CD8-positive, alpha-beta T cell (primary cell): ENCODE measurements at regions of chr2 and their contacts with region 1.

Region 1: GRCh38 chr2:170409164-170409535 is 231.2 kb downstream of the MYO3B start:
- DNase-seq: peak; percentile 36 to 85 (median 75)
- ATAC-seq: peak; percentile 59
- H3K4me3 ChIP-seq: no peak overlapping the region
- H3K4me3 Mint-ChIP-seq: peak overlapping the region; percentile 40
- H3K27ac ChIP-seq: no peak overlapping the region
- H3K27ac Mint-ChIP-seq: no peak overlapping the region
- H3K4me1 ChIP-seq: peaks cover 9% of the 10 kb centered on the region
- H3K4me1 Mint-ChIP-seq: peaks cover 13% of the 10 kb centered on the region
- H3K27me3 ChIP-seq: peaks cover 0 to 2% of the 10 kb centered on the region in 2 experiments
- H3K27me3 Mint-ChIP-seq: peaks cover 27% of the 10 kb centered on the region
- CTCF ChIP-seq: peak; percentile 91

Region 2: GRCh38 chr2:170350929-170351826 is 58.0 kb before region 1 on chr2:
- CTCF ChIA-PET with region 1: no interaction called
- POLR2A ChIA-PET with region 1: no interaction called
- intact Hi-C with region 1: no loop called
- DNase-seq: no peak
- ATAC-seq: no peak
- H3K4me3 ChIP-seq: no peak overlapping the region
- H3K4me3 Mint-ChIP-seq: no peak overlapping the region
- H3K27ac ChIP-seq: no peak overlapping the region
- H3K27ac Mint-ChIP-seq: no peak overlapping the region
- H3K4me1 ChIP-seq: peaks cover 16% of the 10 kb centered on the region
- H3K4me1 Mint-ChIP-seq: peaks cover 19% of the 10 kb centered on the region
- H3K27me3 ChIP-seq: no peaks in the 10 kb centered on the region
- H3K27me3 Mint-ChIP-seq: peaks cover 14% of the 10 kb centered on the region
- CTCF ChIP-seq: no peak

Region 3: GRCh38 chr2:170391018-170391417 is 18.1 kb before region 1 on chr2:
- CTCF ChIA-PET with region 1: interaction called, 39 read pairs
- POLR2A ChIA-PET with region 1: no interaction called
- intact Hi-C with region 1: no loop called
- DNase-seq: no peak
- ATAC-seq: no peak
- H3K4me3 ChIP-seq: no peak overlapping the region
- H3K4me3 Mint-ChIP-seq: no peak overlapping the region
- H3K27ac ChIP-seq: no peak overlapping the region
- H3K27ac Mint-ChIP-seq: no peak overlapping the region
- H3K4me1 ChIP-seq: no peaks in the 10 kb centered on the region
- H3K4me1 Mint-ChIP-seq: no peaks in the 10 kb centered on the region
- H3K27me3 ChIP-seq: peaks cover 0 to 3% of the 10 kb centered on the region in 2 experiments
- H3K27me3 Mint-ChIP-seq: peaks cover 28% of the 10 kb centered on the region
- CTCF ChIP-seq: no peak

Region 4: DNA sequence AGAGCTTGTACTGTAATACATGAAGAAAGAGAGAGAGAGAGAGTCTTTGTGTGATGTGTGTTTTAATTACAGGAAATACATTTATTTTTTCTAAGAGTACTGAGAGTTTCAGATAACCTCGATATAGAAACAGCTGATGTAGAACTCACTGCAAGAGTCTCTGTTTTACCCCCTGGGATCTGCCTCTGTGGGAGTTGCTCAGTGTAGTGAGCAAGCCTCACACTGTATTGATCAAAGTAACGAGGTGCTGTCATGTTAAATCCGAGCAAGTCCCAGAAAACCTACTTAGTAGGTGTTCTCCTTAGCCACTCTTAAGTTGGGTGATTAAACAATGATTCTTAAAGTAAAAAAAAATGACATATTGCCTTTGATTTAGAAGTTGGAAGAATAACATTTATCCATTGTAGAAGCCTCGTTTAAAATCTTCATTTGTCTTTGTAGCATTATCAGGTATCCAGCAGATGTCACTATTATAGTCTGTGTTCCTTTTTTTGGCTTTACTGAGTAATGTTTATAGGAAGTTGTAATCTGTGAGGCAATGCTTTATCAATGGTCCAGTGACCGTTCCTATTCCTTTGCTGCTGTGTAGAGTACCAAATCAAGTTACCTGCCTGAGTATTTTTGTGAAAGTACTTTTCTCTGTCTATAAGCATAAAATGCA is 12.2 kb before region 1 on chr2:
- CTCF ChIA-PET with region 1: interaction called, 39 read pairs
- POLR2A ChIA-PET with region 1: no interaction called
- intact Hi-C with region 1: no loop called
- DNase-seq: peak in 2 of 9 experiments; percentile 4 to 19
- ATAC-seq: no peak
- H3K4me3 ChIP-seq: no peak overlapping the region
- H3K4me3 Mint-ChIP-seq: no peak overlapping the region
- H3K27ac ChIP-seq: no peak overlapping the region
- H3K27ac Mint-ChIP-seq: no peak overlapping the region
- H3K4me1 ChIP-seq: no peaks in the 10 kb centered on the region
- H3K4me1 Mint-ChIP-seq: no peaks in the 10 kb centered on the region
- H3K27me3 ChIP-seq: no peaks in the 10 kb centered on the region
- H3K27me3 Mint-ChIP-seq: peaks cover 30% of the 10 kb centered on the region
- CTCF ChIP-seq: no peak

Region 5: GRCh38 chr2:170420961-170421687 is 12.0 kb after region 1 on chr2:
- CTCF ChIA-PET with region 1: interaction called, 47 read pairs
- POLR2A ChIA-PET with region 1: no interaction called
- intact Hi-C with region 1: no loop called
- DNase-seq: no peak
- ATAC-seq: no peak
- H3K4me3 ChIP-seq: no peak overlapping the region
- H3K4me3 Mint-ChIP-seq: no peak overlapping the region
- H3K27ac ChIP-seq: no peak overlapping the region
- H3K27ac Mint-ChIP-seq: no peak overlapping the region
- H3K4me1 ChIP-seq: no peaks in the 10 kb centered on the region
- H3K4me1 Mint-ChIP-seq: no peaks in the 10 kb centered on the region
- H3K27me3 ChIP-seq: no peaks in the 10 kb centered on the region
- H3K27me3 Mint-ChIP-seq: peaks cover 12% of the 10 kb centered on the region
- CTCF ChIP-seq: no peak

Region 6: DNA sequence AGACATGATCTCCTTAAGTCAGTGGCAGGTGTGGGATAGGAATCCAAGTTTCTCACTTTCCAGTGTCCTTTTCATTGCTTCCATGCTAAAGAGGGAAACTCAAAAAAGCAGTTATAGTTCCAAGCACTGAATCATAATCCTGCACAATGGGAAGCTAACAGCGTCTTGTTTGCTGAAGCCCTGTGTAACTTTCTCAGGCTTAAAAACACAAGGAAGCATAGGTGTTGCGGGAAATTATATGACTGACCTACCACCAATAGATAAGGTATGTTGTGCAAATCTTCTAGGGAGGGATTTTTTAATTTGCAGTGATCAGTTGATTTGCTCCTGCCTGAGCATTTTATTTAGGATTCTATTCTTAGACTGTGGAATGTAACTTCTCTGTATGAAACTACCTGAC is 19.7 kb after region 1 on chr2:
- CTCF ChIA-PET with region 1: interaction called, 14 read pairs
- POLR2A ChIA-PET with region 1: no interaction called
- intact Hi-C with region 1: no loop called
- DNase-seq: no peak
- ATAC-seq: no peak
- H3K4me3 ChIP-seq: no peak overlapping the region
- H3K4me3 Mint-ChIP-seq: no peak overlapping the region
- H3K27ac ChIP-seq: no peak overlapping the region
- H3K27ac Mint-ChIP-seq: no peak overlapping the region
- H3K4me1 ChIP-seq: no peaks in the 10 kb centered on the region
- H3K4me1 Mint-ChIP-seq: no peaks in the 10 kb centered on the region
- H3K27me3 ChIP-seq: no peaks in the 10 kb centered on the region
- H3K27me3 Mint-ChIP-seq: peaks cover 5% of the 10 kb centered on the region
- CTCF ChIP-seq: no peak

Region 7: DNA sequence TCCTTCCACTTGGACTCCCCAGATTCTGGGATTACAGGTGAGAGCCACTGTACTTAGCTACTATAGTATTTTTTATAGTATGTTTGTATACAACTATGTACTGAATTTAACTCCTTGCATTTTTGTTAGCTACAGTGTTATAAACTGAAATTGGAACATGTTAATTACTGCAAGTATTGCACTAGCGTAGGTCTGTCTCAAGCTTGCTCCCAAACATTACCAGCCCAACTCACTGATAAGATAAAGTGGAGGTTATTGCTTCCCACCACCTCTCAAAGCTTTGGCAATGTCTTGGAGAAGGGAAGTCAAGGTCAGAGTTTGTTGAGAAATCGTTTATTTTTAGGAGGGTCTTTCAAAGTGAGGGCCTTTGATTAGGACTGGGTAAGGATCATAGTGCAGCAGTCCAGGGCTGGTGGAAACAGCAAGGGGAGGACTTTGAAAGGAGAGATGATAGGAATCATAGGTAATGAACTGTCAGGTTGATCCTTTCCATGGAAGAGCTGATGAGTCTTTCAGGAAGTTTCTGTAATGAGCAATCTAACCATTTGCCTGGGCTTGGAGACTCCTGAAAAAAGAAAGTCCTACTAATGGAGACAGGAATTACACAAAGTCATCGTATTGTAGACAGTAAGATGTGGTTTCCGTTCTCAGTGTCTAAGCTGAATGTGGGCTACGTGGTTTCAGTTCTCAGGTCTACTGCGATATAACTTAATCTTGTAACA is 25.9 kb after region 1 on chr2:
- CTCF ChIA-PET with region 1: interaction called, 14 read pairs
- POLR2A ChIA-PET with region 1: no interaction called
- intact Hi-C with region 1: no loop called
- DNase-seq: peak in 2 of 9 experiments; percentile 47 to 67
- ATAC-seq: peak; percentile 64
- H3K4me3 ChIP-seq: no peak overlapping the region
- H3K4me3 Mint-ChIP-seq: peak overlapping the region; percentile 67
- H3K27ac ChIP-seq: no peak overlapping the region
- H3K27ac Mint-ChIP-seq: peak overlapping the region; percentile 38
- H3K4me1 ChIP-seq: peaks cover 21% of the 10 kb centered on the region
- H3K4me1 Mint-ChIP-seq: peaks cover 35% of the 10 kb centered on the region
- H3K27me3 ChIP-seq: no peaks in the 10 kb centered on the region
- H3K27me3 Mint-ChIP-seq: peaks cover 3% of the 10 kb centered on the region
- CTCF ChIP-seq: no peak

Region 8: DNA sequence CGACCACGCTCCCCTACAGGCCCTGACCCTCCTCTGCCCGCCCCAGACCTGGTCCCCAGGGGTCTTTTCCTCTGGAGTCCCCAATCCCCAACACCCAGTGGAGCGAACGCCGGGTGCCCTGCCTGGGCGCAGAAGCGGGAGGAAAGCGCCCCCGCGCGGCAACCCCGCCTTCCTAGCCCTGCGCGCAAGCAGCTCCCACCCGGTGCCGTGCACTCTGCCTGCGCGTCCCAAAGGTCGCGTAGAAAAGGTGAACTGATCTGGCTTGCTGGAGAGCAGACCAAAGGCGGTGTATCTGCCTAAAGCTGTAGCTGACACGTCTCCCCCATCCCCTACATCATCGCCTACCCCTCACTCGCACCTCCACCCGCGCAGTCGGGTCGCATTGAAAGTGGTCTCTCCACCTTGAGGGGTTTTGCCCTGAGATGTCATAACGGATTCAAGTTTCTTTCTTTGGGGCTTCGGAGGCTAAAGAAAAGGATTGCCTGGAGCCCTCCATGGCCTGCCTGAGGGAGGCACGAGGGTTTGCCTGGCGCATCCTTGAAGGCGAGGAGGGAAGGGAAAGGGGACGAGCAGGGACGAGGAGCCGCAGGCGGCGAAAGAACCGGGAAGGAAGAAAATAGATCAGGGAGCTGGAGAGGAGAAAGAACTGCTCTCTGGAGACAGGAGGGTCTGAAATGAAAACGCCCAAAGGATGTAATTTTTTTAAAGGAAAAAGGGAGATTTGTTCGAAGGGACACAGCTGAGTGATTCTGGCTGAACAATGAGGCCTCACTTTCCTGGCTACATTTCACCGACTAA is 413.3 kb after region 1 on chr2:
- CTCF ChIA-PET with region 1: interaction called, 149 read pairs
- POLR2A ChIA-PET with region 1: no interaction called
- intact Hi-C with region 1: no loop called
- DNase-seq: peak in 4 of 9 experiments; percentile 23 to 59 (median 42)
- ATAC-seq: no peak
- H3K4me3 ChIP-seq: peak overlapping the region; percentile 42 to 53
- H3K4me3 Mint-ChIP-seq: peak overlapping the region; percentile 72
- H3K27ac ChIP-seq: no peak overlapping the region
- H3K27ac Mint-ChIP-seq: no peak overlapping the region
- H3K4me1 ChIP-seq: peaks cover 51% of the 10 kb centered on the region
- H3K4me1 Mint-ChIP-seq: peaks cover 40% of the 10 kb centered on the region
- H3K27me3 ChIP-seq: peaks cover 40 to 51% of the 10 kb centered on the region in 2 experiments
- H3K27me3 Mint-ChIP-seq: peaks cover 74% of the 10 kb centered on the region
- CTCF ChIP-seq: peak; percentile 13